Gastrocnemius medialis (tissue), 4 donors: ENCODE measurements at regions of chr17 and their contacts with region 1.

Region 1: DNA sequence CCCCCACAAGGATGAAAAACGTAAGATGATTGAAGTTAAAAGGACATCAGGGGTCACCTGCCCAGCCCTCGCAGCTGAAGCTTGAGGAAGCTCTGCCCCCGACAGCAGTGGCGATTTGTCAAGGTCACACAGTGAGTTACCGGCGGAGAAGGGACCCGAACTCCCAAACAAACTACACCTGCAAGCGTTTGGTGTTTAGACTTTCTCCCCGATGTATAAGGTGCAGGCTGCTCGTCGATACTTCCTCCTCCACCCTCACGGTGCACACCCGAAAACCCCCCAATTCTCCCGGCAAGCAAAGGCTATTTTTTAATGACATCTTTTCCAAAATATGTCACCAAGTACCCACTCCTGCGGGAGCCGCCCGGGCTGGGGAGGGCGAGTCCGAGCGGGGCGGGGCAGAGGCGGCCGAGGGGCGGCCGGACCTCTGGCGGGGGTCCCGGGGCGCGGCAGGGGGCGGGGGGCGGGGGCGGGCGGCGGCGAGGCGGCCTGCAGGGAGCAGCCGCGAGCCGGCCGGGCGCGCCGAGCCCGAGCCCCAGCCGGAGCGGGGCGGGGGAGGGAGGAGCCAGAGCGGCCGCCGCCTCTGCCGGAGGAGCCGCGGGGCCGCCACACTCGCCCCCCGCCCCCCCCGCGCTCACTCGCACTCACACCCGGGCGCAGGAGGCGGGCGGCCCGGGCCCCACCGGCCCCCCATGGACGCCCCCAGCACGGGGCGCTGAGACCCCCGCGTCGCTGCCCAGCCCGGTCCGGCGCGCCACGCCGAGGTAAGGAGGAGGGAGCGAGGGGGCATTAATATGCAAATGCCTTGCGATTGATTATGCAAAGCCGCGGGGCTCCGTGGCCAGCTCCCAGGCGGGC is at the start of gene THRA:
- DNase-seq: peak; percentile 55 to 67
- ATAC-seq: peak; percentile 59 to 61
- H3K4me3 ChIP-seq: peak within 1 kb of the TSS; percentile 84 to 100 (median 96)
- H3K27ac ChIP-seq: peak within 1 kb of the TSS; percentile 100
- H3K4me1 ChIP-seq: peaks cover 38 to 47% of the 10 kb centered on the region in 2 donors
- H3K27me3 ChIP-seq: no peaks in the 10 kb centered on the region
- CTCF ChIP-seq: peak in 2 of 5 experiments; percentile 26 to 27
- POLR2A ChIP-seq: peak; percentile 73 to 85
- total RNA-seq, gene THRA: 42.2 to 71.6 (median 48.2) TPM

Region 2: DNA sequence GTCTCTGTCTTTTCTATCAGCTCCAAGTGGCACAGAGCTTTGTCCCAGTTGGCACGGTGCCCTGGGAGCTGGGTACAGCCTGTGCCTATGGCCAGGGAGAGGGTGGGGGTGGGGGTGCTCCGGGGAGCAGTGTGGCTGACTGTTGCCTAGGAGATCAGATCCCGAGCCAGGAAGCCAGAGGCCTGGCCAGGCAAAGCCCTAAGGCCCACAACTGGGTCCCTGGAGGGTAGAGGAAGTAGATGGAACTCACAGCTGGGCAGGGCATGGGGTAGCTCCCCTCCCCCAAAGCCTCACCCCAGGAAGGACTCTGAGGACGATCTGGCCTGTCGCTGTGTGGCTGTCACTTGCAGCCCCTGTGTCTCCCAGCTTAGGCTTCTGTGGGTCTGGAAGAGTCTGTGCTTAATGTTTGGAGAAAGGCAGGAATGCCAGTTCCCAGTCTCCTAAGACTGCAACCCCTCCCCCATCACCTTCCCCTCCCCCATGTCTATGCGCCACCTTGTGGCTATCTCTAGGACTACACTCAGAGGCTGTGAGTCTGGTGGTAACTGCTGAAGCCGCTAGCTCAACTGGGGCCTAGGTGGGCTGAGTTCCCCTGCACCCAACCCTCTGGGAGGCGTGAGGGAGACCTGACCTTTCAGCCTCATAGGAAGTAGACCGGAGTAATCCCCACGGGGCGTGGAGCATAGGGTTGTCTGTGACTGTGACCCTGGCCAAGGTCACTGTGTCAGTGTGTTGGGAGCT is 12.8 kb after region 1 on chr17:
- in situ Hi-C with region 1: no loop called
- intact Hi-C with region 1: loop called (anchors 1 kb)
- DNase-seq: peak; percentile 77 to 91
- ATAC-seq: peak; percentile 46 to 65
- H3K4me3 ChIP-seq: peak overlapping the region in 3 of 4 donors; percentile 14 to 21 (median 18)
- H3K27ac ChIP-seq: peak overlapping the region; percentile 100
- H3K4me1 ChIP-seq: peaks cover 63 to 68% of the 10 kb centered on the region in 2 donors
- H3K27me3 ChIP-seq: no peaks in the 10 kb centered on the region
- CTCF ChIP-seq: peak; percentile 92 to 98 (median 97)
- POLR2A ChIP-seq: no peak

Region 3: DNA sequence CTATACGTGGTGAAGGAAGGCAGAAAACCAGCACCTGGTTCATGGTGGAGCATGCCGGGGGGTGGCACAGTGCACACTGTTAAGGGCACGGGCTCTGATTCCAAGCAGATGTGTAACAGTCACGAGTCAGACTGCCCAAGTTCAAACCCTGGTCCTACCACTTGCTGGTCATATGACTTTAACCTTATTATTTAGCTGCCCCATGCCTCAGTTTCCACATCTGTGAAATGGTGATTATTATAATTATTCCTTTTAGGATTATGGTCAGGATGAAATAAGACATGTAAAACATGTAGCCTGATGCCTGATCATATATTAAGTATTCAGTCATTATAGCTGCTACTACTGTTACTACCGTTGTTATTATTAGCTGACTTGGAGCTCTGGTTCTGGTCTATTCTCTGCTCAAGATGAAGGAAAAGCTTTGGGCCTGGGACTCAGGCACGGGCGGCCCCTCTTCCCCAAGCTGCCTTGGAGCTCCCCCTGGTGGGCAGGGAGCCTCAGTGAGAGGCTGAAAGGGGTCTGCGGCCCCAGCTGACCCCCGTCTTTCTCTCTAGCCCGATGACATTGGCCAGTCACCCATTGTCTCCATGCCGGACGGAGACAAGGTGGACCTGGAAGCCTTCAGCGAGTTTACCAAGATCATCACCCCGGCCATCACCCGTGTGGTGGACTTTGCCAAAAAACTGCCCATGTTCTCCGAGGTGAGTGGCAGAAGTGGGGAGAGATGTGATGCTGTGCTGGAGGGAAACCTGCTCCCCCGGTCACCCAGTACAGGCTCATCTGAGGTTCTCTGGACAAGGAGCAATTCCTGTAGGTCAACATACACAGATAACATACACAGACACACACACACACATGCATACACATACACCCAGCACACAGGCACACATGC is 23.8 kb after region 1 on chr17:
- in situ Hi-C with region 1: no loop called
- intact Hi-C with region 1: loop called (anchors 1 kb)
- DNase-seq: peak in 1 of 2 donors; percentile 62
- ATAC-seq: peak; percentile 56 to 62
- H3K4me3 ChIP-seq: no peak overlapping the region
- H3K27ac ChIP-seq: peak overlapping the region; percentile 69 to 98 (median 84)
- H3K4me1 ChIP-seq: peaks cover 18 to 19% of the 10 kb centered on the region in 2 donors
- H3K27me3 ChIP-seq: no peaks in the 10 kb centered on the region
- CTCF ChIP-seq: peak; percentile 95 to 97 (median 96)
- POLR2A ChIP-seq: no peak